ENCODE measurements at regions of chr2 and their contacts with region 1.

Region 1: DNA sequence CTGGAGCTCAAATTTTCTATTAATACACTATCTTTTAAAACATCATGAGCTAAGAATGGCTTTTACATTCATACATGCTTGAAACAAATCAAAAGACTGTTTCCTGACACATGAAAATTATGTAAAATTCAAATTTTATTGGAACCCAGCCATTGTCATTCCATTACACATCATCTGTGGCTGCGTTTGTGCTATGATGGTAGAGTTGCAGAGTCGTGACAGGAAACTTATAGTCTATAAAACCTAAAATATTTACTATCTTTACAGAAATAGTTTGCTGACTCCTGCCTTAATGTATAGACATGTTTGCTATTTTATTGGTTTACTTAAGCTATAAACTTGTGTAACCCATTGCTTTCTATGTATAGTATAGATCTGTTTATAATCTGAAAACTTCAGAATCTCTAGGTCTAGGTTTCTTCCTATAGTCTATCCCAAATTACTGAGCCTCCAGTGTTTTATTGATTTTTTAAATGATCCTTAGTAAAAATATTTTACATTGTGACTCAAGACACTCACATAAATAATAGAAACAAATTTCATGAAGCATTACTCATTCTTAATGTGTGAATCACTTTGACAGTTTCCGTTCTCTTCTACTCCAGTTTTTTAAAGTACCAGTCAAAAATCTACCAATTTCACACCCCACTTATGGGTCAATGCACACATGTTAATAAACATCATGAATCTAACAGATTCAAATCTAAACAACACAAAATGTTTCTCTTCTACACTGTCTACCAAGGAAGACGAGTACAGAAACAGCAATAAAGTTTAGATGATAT is 26.4 kb upstream of the MRPL19 start:
- DNase-seq: no peak
- H3K4me3 Mint-ChIP-seq: no peak overlapping the region
- H3K27ac Mint-ChIP-seq: no peak overlapping the region
- H3K4me1 Mint-ChIP-seq: no peaks in the 10 kb centered on the region
- H3K27me3 Mint-ChIP-seq: peaks cover 32% of the 10 kb centered on the region

Region 2: GRCh38 chr2:75303236-75303635 is 316.9 kb before region 1 on chr2:
- CTCF ChIA-PET with region 1: no interaction called
- POLR2A ChIA-PET with region 1: no interaction called
- DNase-seq: no peak
- H3K4me3 Mint-ChIP-seq: no peak overlapping the region
- H3K27ac Mint-ChIP-seq: no peak overlapping the region
- H3K4me1 Mint-ChIP-seq: no peaks in the 10 kb centered on the region
- H3K27me3 Mint-ChIP-seq: peaks cover 2% of the 10 kb centered on the region

Region 3: DNA sequence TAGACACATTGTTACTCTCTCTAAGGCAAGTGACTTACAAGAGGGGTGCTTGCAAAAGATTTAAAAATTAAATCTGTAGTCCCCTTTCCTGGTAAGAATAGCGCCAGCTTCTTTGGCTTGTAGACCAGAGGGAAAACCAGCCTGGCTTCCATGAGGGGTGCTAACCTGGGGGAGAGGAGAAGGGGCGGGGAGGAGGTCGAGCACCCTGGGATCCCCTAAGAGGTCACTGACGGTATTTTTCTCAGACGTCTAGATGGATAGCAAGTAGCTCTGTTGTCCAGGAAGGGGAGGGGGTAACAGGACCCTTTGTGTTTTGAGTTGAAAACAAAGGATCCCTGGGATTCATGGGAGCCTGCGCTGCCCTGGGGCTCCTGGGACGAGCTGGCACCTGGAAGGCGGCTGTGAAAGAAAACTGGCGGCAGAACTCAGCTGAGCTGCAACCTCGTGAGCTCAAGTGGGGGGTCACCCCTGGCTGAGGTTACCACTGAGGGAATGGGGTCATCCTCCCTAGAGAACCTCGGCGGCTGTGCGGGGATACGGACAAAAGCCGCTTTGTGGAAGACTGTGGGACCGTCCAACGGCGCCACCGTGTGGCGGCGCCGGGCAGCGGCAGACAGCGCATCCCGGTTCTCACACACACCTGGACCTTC is 11.3 kb before region 1 on chr2:
- CTCF ChIA-PET with region 1: interaction called, 11 read pairs
- POLR2A ChIA-PET with region 1: no interaction called
- DNase-seq: peak; percentile 54
- H3K4me3 Mint-ChIP-seq: no peak overlapping the region
- H3K27ac Mint-ChIP-seq: no peak overlapping the region
- H3K4me1 Mint-ChIP-seq: no peaks in the 10 kb centered on the region
- H3K27me3 Mint-ChIP-seq: peaks cover 41% of the 10 kb centered on the region

Region 4: DNA sequence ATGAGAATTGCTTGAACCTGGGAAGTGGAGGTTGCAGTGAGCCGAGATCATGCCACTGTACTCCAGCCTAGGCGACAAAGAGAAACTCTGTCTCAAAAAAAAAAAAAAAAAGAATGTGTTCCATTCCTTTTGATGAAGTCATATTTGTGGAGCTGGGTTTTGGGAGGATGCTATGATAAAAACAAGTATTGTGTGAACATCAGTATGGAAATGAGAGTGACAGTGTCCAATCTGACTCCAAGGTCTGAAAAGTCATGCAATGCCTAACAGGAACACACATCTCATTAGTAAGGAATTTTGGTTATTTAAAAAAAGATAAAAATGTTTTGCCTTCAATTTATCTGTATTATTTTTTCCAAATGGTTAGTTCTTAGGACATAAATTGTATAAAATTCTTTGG is 78.8 kb after region 1 on chr2:
- CTCF ChIA-PET with region 1: no interaction called
- POLR2A ChIA-PET with region 1: no interaction called
- DNase-seq: no peak
- H3K4me3 Mint-ChIP-seq: no peak overlapping the region
- H3K27ac Mint-ChIP-seq: no peak overlapping the region
- H3K4me1 Mint-ChIP-seq: no peaks in the 10 kb centered on the region
- H3K27me3 Mint-ChIP-seq: no peaks in the 10 kb centered on the region

Measured in activated CD4-positive, alpha-beta memory T cell treated with anti-CD3 and anti-CD28 coated beads, Interleukin-2, amount 10 ng/mL, durations not matched to agents 7 days and 5 days (primary cell).